Activated CD4-positive, alpha-beta T cell treated with anti-CD3 and anti-CD28 coated beads for 36 hours (primary cell): ENCODE measurements at regions of chr15 and their contacts with region 1.

Region 1: GRCh38 chr15:64717735-64718495 is 57.5 kb downstream of the RBPMS2 start:
- DNase-seq: peak; percentile 28
- ATAC-seq: peak; percentile 51
- H3K4me3 Mint-ChIP-seq: no peak overlapping the region
- H3K27ac Mint-ChIP-seq: peak overlapping the region; percentile 33
- H3K4me1 Mint-ChIP-seq: peaks cover 19% of the 10 kb centered on the region
- H3K27me3 Mint-ChIP-seq: no peaks in the 10 kb centered on the region

Region 2: GRCh38 chr15:64566629-64567427 is 151.1 kb before region 1 on chr15:
- CTCF ChIA-PET with region 1: no interaction called
- POLR2A ChIA-PET with region 1: interaction called, 11 read pairs
- intact Hi-C with region 1: no loop called
- DNase-seq: no peak
- ATAC-seq: peak; percentile 24
- H3K4me3 Mint-ChIP-seq: no peak overlapping the region
- H3K27ac Mint-ChIP-seq: peak overlapping the region; percentile 11
- H3K4me1 Mint-ChIP-seq: peaks cover 52% of the 10 kb centered on the region
- H3K27me3 Mint-ChIP-seq: no peaks in the 10 kb centered on the region

Region 3: GRCh38 chr15:64681424-64682024 is 36.4 kb before region 1 on chr15:
- CTCF ChIA-PET with region 1: interaction called, 11 read pairs
- POLR2A ChIA-PET with region 1: no interaction called
- intact Hi-C with region 1: no loop called
- DNase-seq: peak; percentile 16
- ATAC-seq: peak; percentile 60
- H3K4me3 Mint-ChIP-seq: no peak overlapping the region
- H3K27ac Mint-ChIP-seq: no peak overlapping the region
- H3K4me1 Mint-ChIP-seq: no peaks in the 10 kb centered on the region
- H3K27me3 Mint-ChIP-seq: no peaks in the 10 kb centered on the region

Region 4: GRCh38 chr15:64740311-64741170 is 22.6 kb after region 1 on chr15:
- CTCF ChIA-PET with region 1: no interaction called
- POLR2A ChIA-PET with region 1: interaction called, 11 read pairs
- intact Hi-C with region 1: no loop called
- DNase-seq: no peak
- ATAC-seq: no peak
- H3K4me3 Mint-ChIP-seq: no peak overlapping the region
- H3K27ac Mint-ChIP-seq: no peak overlapping the region
- H3K4me1 Mint-ChIP-seq: no peaks in the 10 kb centered on the region
- H3K27me3 Mint-ChIP-seq: no peaks in the 10 kb centered on the region

Region 5: GRCh38 chr15:65195548-65195923 is 477.6 kb after region 1 on chr15:
- CTCF ChIA-PET with region 1: no interaction called
- POLR2A ChIA-PET with region 1: no interaction called
- intact Hi-C with region 1: no loop called
- DNase-seq: no peak
- ATAC-seq: no peak
- H3K4me3 Mint-ChIP-seq: no peak overlapping the region
- H3K27ac Mint-ChIP-seq: no peak overlapping the region
- H3K4me1 Mint-ChIP-seq: no peaks in the 10 kb centered on the region
- H3K27me3 Mint-ChIP-seq: no peaks in the 10 kb centered on the region